HCT116 (cell line): ENCODE measurements at regions of chr1 and their contacts with region 1.

Region 1: DNA sequence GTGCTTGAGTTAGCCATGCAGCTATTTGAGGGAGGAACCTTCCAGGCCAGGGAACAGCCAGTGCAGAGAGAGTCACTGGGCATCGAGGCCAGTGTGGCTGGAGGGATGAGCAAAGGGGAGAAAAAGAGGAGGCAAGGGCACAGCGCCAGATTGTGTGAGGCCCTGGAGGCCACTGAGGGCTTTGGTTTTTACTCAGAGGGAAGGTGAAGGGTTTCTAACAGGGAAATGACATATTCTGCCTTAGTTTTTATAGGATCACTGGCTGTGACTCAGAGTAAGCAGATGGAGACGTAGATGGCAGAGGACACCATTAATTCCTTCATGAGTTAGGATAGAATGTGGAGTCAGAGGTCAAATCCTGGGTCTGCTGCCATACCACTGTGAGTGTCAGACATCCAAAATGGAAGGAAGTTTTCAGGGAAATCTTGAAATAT is 32.9 kb downstream of the C1orf21 start:
- DNase-seq: no peak
- ATAC-seq: no peak
- H3K4me3 ChIP-seq: no peak overlapping the region
- H3K27ac ChIP-seq: no peak overlapping the region
- H3K4me1 ChIP-seq: no peaks in the 10 kb centered on the region
- H3K27me3 ChIP-seq: no peaks in the 10 kb centered on the region
- CTCF ChIP-seq: no peak
- POLR2A ChIP-seq: no peak
- RAD21 ChIP-seq: no peak

Region 2: GRCh38 chr1:184406479-184406878 is 13.3 kb before region 1 on chr1:
- CTCF ChIA-PET with region 1: no interaction called
- POLR2A ChIA-PET with region 1: no interaction called
- RAD21 ChIA-PET with region 1: no interaction called
- intact Hi-C with region 1: loop called (anchors 1 kb)
- DNase-seq: no peak
- ATAC-seq: no peak
- H3K4me3 ChIP-seq: no peak overlapping the region
- H3K27ac ChIP-seq: no peak overlapping the region
- H3K4me1 ChIP-seq: no peaks in the 10 kb centered on the region
- H3K27me3 ChIP-seq: no peaks in the 10 kb centered on the region
- CTCF ChIP-seq: no peak
- POLR2A ChIP-seq: no peak
- RAD21 ChIP-seq: no peak

Region 3: DNA sequence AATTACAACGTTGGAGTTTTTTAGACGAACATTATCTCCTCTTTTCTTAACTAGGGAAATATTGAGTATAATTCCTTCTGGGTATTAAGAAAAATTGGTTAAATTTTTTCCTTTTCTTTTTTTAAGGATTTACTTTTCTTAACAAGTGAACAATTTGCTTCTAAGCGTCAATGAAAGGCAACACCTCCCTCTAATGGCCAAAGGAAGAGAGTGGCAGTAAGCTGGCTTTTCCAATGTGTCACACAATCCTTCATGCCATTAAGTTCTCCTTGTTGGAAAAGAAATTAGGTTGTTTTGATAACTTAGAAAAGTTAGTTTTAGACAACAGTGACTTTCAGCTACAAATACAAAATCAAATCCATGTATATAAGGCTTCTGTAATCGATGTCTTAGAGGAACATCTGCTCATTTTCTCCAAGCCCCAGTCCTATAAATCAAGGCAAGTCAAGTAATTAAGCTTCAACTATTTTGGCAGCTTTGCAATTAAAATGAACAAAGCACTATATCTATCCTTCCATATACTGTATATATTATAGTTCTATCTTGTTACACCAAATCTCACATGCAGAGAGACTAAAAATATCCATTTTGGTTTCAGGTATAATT is 272.1 kb after region 1 on chr1:
- CTCF ChIA-PET with region 1: no interaction called
- POLR2A ChIA-PET with region 1: no interaction called
- RAD21 ChIA-PET with region 1: no interaction called
- intact Hi-C with region 1: no loop called
- DNase-seq: peak; percentile 13
- ATAC-seq: peak; percentile 67
- H3K4me3 ChIP-seq: no peak overlapping the region
- H3K27ac ChIP-seq: no peak overlapping the region
- H3K4me1 ChIP-seq: no peaks in the 10 kb centered on the region
- H3K27me3 ChIP-seq: no peaks in the 10 kb centered on the region
- CTCF ChIP-seq: peak; percentile 50 to 79 (median 78); a peak in 5 of 6 replicates
- POLR2A ChIP-seq: no peak
- RAD21 ChIP-seq: peak; percentile 73